ENCODE measurements at regions of chr5 and their contacts with region 1.

Region 1: DNA sequence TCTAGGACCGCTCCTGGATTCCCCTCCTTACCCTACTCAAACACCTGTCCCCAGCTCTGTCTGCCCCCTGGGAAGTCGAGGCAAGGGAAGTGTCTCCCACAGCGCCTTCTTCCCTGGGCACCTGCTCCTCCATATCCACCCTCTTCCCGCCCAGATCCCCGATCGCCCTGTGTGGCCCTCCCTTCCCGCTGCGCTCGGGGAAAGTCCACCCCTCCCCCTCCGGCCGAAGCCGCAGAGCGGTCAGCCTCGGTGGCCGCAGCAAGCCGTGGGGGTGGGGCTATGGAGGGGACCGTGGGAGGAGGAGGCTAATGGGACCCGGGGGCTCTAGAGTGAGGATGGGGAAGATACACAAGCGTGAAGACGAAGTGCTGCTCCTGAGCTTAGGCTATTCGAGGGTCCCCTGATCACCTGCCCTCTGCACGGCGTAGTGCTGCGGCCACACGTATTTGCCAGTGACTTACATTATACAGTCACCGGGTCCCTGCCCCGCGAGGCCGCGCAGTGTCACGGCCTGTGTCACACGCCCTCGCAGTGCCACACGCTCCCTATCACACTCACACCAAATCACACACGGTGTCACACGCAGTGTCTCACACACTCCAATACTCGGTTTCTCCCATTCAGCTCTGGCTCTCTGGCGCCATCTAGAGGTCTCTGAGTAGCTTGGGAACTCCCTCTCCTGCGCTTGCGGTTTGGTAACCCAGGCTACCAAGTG is 658 bp upstream of the PCDH1 start:
- DNase-seq: peak; percentile 86 to 99 (median 96)

Region 2: GRCh38 chr5:141691867-141692532 is 186.9 kb before region 1 on chr5:
- intact Hi-C with region 1: loop called (anchors 5 kb)
- DNase-seq: peak; percentile 76 to 96 (median 90)

Region 3: DNA sequence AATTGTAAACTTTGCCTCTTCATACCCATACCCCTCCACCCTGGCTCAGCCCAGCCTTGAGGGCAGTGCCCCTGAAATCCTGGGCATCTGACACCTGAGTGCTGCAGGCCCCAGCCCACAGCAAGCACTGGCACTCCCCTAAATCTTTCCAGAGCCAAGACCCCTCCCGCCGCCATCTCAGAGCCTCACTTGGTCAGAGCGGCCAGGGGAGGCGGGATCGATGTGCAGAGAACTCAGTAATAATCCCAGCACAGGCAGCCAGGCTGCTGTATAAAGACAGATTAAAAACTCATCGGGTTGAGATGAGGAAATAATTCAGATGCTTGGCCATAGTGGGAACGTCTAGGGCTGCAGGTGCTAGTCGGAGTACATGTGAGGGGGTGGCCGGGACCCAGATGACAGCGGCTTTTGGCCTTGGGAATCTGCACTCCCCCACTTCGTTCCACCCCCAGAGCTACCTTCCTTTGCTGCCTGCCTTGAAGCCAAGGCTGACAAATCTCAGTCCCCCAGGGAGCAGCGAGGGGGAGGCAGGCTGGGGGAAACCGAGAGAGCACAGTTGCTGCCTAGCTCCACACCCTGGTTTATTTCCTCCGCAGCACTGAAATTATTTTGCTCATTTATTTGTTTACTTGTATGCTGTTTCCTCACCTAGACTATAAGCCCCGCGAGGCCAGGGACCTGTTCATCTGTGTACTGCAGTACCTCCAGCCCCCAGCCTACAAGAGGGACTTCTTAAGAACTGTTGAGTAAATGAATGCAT is 177.3 kb before region 1 on chr5:
- intact Hi-C with region 1: loop called (anchors 5 kb)
- DNase-seq: peak in 39 of 42 donors; percentile 27 to 88 (median 64)

Region 4: GRCh38 chr5:141813789-141814602 is 64.9 kb before region 1 on chr5:
- intact Hi-C with region 1: loop called (anchors 2 kb)
- DNase-seq: peak in 39 of 42 donors; percentile 37 to 89 (median 68)

Region 5: GRCh38 chr5:141923448-141924352 is 44.8 kb after region 1 on chr5 and contains the start of gene DELE1:
- intact Hi-C with region 1: loop called (anchors 5 kb)
- DNase-seq: peak; percentile 87 to 98 (median 93)

Region 6: GRCh38 chr5:141968914-141969608 is 90.2 kb after region 1 on chr5 and contains the start of gene RNF14:
- intact Hi-C with region 1: loop called (anchors 10 kb)
- DNase-seq: peak; percentile 74 to 96 (median 92)

Measured in head of caudate nucleus (tissue), 42 donors.